Activated CD4-positive, alpha-beta T cell treated with anti-CD3 and anti-CD28 coated beads for 36 hours (primary cell): ENCODE measurements at regions of chr7 and their contacts with region 1.

Region 1: GRCh38 chr7:104156842-104157277 is 51.0 kb downstream of the ORC5 start:
- DNase-seq: no peak
- ATAC-seq: no peak
- H3K4me3 Mint-ChIP-seq: no peak overlapping the region
- H3K27ac Mint-ChIP-seq: no peak overlapping the region
- H3K4me1 Mint-ChIP-seq: no peaks in the 10 kb centered on the region
- H3K27me3 Mint-ChIP-seq: no peaks in the 10 kb centered on the region

Region 2: DNA sequence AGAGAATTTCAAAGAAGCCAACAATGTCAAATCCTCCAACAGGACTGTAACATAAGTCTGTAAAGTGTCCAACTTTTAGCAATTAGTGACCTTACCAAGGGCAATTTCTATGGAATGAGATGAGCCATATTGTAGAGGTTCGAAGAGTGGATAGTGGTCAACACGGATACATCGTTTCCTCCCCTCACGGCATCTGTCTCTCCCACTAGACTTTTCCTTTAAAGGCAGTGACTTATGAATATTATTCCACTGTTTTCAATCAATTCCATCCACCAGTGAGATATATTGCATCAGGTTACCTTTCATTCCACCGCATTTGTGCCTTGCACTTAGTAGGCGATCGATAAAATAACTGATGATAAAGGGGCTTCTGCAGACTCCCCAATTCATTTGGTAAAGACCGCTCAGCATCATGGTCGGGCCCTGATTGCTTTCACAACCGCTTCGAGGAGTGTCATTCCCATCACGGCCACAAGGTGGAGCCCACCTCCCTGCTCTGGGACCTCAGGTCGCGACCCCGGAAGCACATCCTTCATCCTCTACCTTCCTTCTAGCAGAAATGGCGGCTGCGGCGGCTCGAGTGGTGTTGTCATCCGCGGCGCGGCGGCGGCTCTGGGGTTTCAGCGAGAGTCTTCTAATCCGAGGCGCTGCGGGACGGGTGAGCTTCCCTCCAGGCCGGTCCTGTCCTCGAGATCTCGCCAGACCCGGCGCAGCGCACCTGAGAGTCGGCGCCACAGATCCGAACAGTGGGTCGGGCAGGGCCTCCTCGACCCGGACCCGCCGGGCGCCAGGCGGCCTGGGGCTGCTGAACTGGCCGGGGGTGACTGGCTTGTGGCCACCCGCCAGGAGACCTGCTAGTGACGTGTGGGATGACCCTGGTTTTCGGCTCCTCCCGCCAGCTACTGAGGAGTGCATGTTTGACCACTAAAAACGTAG is 859.7 kb before region 1 on chr7 and contains the start of gene PMPCB:
- CTCF ChIA-PET with region 1: no interaction called
- POLR2A ChIA-PET with region 1: no interaction called
- intact Hi-C with region 1: loop called in 1 of 2 experiments (anchors 10 kb)
- DNase-seq: peak; percentile 98
- ATAC-seq: peak; percentile 98
- H3K4me3 Mint-ChIP-seq: peak within 1 kb of the TSS; percentile 89
- H3K27ac Mint-ChIP-seq: peak within 1 kb of the TSS; percentile 93
- H3K4me1 Mint-ChIP-seq: peaks cover 33% of the 10 kb centered on the region
- H3K27me3 Mint-ChIP-seq: no peaks in the 10 kb centered on the region
- total RNA-seq, gene PMPCB: 70.7 to 86.9 TPM

Region 3: GRCh38 chr7:103447073-103447951 is 709.5 kb before region 1 on chr7:
- CTCF ChIA-PET with region 1: no interaction called
- POLR2A ChIA-PET with region 1: no interaction called
- intact Hi-C with region 1: loop called (anchors 2 to 10 kb)
- DNase-seq: peak; percentile 71
- ATAC-seq: peak; percentile 80
- H3K4me3 Mint-ChIP-seq: no peak overlapping the region
- H3K27ac Mint-ChIP-seq: no peak overlapping the region
- H3K4me1 Mint-ChIP-seq: peaks cover 7% of the 10 kb centered on the region
- H3K27me3 Mint-ChIP-seq: peaks cover 69% of the 10 kb centered on the region

Region 4: GRCh38 chr7:103573479-103574058 is 583.3 kb before region 1 on chr7:
- CTCF ChIA-PET with region 1: interaction called, 13 read pairs
- POLR2A ChIA-PET with region 1: no interaction called
- intact Hi-C with region 1: loop called (anchors 1 to 2 kb)
- DNase-seq: no peak
- ATAC-seq: no peak
- H3K4me3 Mint-ChIP-seq: no peak overlapping the region
- H3K27ac Mint-ChIP-seq: no peak overlapping the region
- H3K4me1 Mint-ChIP-seq: no peaks in the 10 kb centered on the region
- H3K27me3 Mint-ChIP-seq: peaks cover 8% of the 10 kb centered on the region

Region 5: DNA sequence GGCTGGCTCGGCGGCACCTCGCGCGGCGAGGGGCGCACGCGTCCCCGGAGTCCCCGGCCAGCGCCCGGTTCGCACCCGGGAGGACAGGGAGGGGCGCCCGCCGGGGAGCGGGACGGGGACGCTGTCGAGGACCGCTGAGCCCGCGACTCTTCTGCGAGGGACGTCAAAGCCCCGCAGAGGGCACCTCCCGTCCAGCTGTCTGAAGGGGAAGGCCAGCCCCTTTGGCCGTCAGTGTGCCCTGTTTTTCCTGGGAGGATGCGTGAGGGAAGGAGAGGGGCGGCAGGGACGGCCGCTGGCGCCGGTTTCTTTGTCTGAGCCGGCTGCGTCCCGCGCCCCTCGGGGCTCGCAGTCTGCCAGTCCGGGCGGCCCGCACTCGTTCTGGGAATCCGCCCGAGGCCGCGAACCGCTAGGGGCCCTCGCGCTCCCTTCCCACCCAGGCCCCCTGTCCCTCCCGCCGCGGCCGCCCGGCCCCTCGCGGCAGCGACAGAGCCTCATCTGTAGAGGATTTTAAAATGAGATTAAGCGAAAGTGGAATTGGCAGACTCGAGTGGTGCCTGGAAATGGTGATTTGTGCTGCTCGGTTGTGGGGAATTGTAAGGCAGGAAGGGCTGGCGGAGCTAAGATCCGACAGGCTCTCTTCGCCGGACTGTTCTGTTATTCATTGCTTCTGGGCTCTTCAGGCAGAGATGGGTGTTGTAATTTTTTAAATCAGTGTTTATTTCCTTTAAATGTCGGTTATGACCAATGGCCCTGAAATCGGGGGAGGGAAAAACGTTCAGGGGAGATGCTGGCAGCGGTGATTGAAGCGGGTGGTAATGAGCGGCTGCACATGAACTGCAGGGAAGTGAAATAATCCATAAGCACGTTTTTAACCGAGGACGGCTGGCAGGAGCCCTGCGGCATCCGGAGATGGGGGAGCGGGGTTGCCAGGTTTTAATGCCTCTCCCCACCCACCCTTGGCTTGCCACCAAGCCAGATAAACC is 166.8 kb before region 1 on chr7:
- CTCF ChIA-PET with region 1: no interaction called
- POLR2A ChIA-PET with region 1: no interaction called
- intact Hi-C with region 1: loop called in 1 of 2 experiments (anchors 10 kb)
- DNase-seq: peak; percentile 16
- ATAC-seq: peak; percentile 19
- H3K4me3 Mint-ChIP-seq: peak overlapping the region; percentile 49
- H3K27ac Mint-ChIP-seq: no peak overlapping the region
- H3K4me1 Mint-ChIP-seq: peaks cover 10% of the 10 kb centered on the region
- H3K27me3 Mint-ChIP-seq: peaks cover 46% of the 10 kb centered on the region

Region 6: DNA sequence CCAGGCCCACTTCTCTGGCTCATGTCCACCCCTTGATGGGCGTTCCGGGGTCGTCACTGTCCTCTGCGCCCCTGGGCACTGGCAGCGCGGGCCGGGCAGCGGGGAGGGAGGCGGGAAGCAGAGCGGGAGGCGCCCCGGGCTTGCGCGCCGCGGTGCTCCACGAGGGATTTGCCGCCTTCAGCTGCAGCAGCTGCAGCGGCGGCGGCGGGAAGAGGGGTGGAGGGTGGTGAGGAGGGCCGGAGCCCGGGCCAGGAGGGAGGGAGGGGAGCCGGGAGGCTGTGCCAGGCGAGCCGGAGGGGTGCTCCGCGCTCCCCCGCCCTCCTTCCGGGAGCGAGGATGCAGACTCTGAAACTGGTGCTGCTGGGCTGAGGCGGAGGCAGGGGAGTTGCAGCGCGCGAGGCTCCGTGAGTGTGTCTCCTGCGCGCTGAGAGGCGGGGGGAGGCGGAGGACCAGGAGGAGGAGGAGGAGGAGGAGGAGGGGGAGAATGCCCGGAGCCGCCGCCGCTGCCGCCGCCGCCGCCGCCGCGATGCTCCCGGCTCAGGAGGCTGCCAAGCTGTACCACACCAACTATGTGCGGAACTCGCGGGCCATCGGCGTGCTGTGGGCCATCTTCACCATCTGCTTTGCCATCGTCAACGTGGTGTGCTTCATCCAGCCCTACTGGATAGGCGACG is 171.6 kb after region 1 on chr7 and contains the start of gene LHFPL3:
- CTCF ChIA-PET with region 1: no interaction called
- POLR2A ChIA-PET with region 1: no interaction called
- intact Hi-C with region 1: no loop called
- DNase-seq: peak; percentile 22
- ATAC-seq: peak; percentile 33
- H3K4me3 Mint-ChIP-seq: peak within 1 kb of the TSS; percentile 17
- H3K27ac Mint-ChIP-seq: no peak within 1 kb of the TSS
- H3K4me1 Mint-ChIP-seq: peaks cover 9% of the 10 kb centered on the region
- H3K27me3 Mint-ChIP-seq: peaks cover 49% of the 10 kb centered on the region
- total RNA-seq, gene LHFPL3: not detected